ENCODE measurements at regions of chr15 and their contacts with region 1.

Region 1: DNA sequence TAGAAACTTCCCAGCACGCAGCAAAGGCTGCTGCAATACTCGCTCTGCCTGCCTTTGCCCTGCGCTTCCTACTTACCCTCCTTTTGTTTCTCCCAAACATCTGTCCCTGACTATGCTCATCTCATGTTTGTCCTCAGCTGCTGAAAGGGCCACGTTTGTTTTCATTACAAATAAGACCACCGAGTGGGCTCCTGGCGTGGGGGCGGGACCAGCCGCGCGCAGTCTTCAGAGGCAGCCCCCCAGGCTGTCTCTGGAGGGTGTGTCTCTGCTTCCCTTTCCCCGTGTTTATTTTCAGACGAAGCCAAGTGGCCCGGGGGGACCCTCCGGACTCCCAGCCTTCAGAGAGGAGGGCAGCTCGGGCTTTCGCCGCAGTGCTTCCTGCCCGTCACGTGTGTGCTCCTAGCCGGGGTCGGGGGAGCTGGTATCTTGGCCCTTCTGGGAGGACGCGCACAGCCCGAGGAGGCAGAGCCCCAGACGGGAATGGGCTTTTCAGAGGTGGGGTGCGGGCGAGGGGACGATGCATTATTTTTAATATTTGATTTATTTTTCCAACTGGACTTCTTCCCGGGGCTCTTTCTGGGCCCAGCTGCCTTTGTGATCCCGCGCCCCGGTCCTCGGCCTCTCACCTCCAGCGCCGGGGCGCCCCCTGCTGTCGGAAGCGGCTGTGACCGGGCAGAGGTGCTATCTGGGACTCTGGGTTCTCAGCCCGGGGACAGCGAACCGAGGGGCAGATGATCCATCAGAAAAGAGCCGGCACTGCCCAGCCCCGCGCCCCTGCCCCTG is 70.0 kb upstream of the CGNL1 start:
- DNase-seq: peak; percentile 89 to 93
- H3K4me3 ChIP-seq: peak overlapping the region; percentile 42 to 53
- H3K27ac ChIP-seq: peak overlapping the region in 1 of 2 donors; percentile 1
- H3K4me1 ChIP-seq: peaks cover 0 to 16% (median 12%) of the 10 kb centered on the region in 4 donors
- H3K27me3 ChIP-seq: no peaks in the 10 kb centered on the region
- CTCF ChIP-seq: peak; percentile 81 to 87

Region 2: GRCh38 chr15:56496635-56497034 is 809.7 kb before region 1 on chr15:
- intact Hi-C with region 1: loop called (anchors 5 kb)
- DNase-seq: peak in 1 of 2 donors; percentile 23
- H3K4me3 ChIP-seq: no peak overlapping the region
- H3K27ac ChIP-seq: no peak overlapping the region
- H3K4me1 ChIP-seq: peaks cover 0 to 4% (median 0%) of the 10 kb centered on the region in 4 donors
- H3K27me3 ChIP-seq: no peaks in the 10 kb centered on the region
- CTCF ChIP-seq: peak; percentile 58 to 81

Region 3: DNA sequence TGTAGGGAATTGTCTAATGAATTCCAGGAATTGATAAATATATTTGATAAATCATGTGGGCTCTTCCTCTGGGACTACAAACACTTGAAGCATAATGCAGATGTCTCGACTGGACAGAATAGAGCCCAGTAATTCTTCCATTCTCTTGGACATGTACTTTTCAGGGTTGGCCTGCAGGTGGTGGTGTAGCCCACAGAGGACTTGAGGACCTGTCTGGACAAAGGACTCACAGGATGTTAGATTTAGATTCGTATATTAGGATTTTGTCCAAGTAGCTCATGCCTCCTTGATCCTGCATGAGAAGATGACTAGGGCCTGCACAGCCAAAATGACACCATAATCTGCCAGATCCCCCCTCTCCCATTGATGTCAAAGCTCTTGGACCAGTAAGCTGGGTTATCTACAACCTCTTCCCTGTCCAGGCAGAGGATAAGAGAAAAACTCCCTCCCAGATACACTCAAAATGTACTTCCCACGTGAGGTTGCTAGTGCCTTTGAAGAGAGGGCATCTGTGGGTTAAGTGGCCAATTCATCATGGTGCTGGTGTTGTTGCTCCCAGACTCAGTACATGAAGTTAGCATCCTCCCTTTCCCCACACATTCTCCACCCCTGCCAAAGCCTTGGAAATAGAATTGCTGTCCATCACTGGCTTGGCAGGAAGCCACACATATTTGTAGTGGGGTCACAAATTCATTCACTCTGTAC is 484.5 kb before region 1 on chr15:
- intact Hi-C with region 1: loop called (anchors 5 kb)
- DNase-seq: no peak
- H3K4me3 ChIP-seq: no peak overlapping the region
- H3K27ac ChIP-seq: no peak overlapping the region
- H3K4me1 ChIP-seq: peaks cover 0 to 17% (median 11%) of the 10 kb centered on the region in 4 donors
- H3K27me3 ChIP-seq: no peaks in the 10 kb centered on the region
- CTCF ChIP-seq: peak; percentile 57

Region 4: DNA sequence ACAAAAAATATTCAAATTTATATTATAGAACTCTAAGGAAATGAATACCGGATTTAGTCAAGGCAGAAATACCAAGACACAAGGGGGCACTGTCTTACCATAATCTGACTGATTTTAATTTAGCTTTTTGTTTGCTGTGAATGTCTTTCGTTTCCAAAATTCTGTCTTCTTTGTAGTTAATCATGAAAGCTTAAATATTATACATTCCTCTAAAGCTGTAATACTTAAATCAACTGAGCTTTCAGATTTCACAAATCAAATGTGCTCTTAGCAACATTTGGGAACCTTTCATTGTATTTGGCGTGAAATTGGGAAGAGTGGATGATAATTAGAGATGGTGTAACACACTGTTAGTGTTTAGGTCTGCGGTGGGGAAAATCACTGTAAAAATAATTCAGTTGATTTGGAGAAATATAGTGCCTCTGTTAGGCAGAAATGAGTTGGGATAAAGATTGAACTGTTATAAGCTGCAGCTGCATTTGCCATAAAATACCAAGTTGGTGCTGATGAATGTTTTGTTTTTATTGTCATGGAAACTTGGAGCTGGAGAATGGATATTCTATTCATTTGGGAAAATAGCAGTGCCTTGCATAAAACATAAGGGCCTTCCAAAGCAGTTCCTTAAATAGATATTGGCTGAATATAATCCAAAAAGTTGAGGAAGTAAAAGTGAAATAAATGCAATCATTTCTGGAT is 159.7 kb before region 1 on chr15:
- intact Hi-C with region 1: loop called (anchors 5 kb)
- DNase-seq: no peak
- H3K4me3 ChIP-seq: peak overlapping the region; percentile 16 to 26
- H3K27ac ChIP-seq: peak overlapping the region in 1 of 2 donors; percentile 48
- H3K4me1 ChIP-seq: peaks cover 0 to 46% (median 28%) of the 10 kb centered on the region in 4 donors
- H3K27me3 ChIP-seq: no peaks in the 10 kb centered on the region
- CTCF ChIP-seq: peak; percentile 59 to 69

Region 5: DNA sequence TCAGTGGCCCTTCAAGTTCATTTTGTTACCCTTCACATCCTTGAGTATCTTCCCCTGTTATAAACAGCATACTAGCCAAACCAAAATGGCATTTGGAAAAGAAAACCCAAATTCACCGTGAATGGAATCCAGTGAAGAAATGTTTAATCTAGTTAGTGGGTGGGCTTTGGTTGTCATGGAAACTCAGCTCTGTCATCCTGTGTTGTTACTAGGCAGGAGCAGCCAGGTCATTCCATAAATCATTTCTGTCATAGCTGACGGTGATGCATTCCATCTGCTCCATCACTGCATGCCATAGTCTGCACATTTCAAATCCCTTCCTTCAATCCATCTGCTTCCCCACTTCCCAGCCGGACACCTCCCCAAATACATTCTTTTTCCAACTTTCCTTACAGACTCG is 70.5 kb before region 1 on chr15:
- intact Hi-C with region 1: no loop called
- DNase-seq: no peak
- H3K4me3 ChIP-seq: no peak overlapping the region
- H3K27ac ChIP-seq: no peak overlapping the region
- H3K4me1 ChIP-seq: no peaks in the 10 kb centered on the region
- H3K27me3 ChIP-seq: no peaks in the 10 kb centered on the region
- CTCF ChIP-seq: no peak